OCI-LY7 (cell line): ENCODE measurements at regions of chr1 and their contacts with region 1.

Region 1: DNA sequence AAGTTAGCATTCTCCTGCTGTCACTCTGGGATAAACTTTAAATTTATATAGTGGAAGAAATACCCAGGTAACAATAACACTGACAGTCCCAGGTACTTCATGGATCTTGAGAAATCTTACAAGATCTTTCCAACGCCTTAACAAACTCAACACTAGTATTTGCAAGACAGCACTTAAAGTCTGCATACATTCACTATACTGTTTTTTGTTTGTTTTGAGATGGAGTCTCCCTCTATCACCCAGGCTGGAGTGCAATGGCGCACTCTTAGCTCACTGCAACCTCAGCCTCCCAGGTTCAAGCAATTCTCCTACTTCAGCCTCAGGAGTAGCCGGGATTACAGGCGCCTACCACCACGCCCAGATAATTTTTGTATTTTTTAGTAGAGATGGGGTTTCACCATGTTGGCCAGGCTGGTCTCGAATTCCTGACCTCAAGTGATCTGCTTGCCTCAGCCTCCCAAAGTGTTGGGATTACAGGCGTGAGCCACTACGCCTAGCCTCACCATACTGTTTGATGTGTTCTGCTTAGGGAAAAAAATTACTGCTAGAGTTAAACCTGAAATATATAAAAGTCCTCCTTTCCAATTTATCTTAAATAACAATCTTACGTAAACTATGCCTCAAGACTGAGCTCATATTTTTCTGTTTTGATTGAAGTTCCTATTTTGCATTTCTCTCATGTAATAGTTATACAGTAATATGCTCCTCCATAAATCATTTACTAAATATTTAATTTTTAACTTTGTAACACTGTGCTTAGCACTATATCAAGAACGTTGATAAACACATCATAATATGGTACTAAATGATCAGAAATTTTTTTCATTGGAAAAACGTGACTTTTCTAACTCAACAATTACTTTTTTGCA is 17.5 kb downstream of the EYA3 start:
- DNase-seq: no peak
- H3K4me3 ChIP-seq: peak overlapping the region; percentile 52
- H3K27ac ChIP-seq: peak overlapping the region; percentile 88
- H3K4me1 ChIP-seq: peaks cover 100% of the 10 kb centered on the region
- CTCF ChIP-seq: no peak

Region 2: GRCh38 chr1:28056129-28056925 is 14.6 kb before region 1 on chr1:
- CTCF ChIA-PET with region 1: interaction called, 3 read pairs
- POLR2A ChIA-PET with region 1: interaction called, 13 read pairs
- intact Hi-C with region 1: no loop called
- DNase-seq: no peak
- H3K4me3 ChIP-seq: peak overlapping the region; percentile 4
- H3K27ac ChIP-seq: peak overlapping the region; percentile 34
- H3K4me1 ChIP-seq: peaks cover 45% of the 10 kb centered on the region
- CTCF ChIP-seq: no peak